ENCODE measurements at regions of chr1 and their contacts with region 1.

Region 1: GRCh38 chr1:172429331-172430127 is 9.0 kb downstream of the C1orf105 start:
- DNase-seq: peak; percentile 99
- ATAC-seq: peak; percentile 76
- H3K4me3 ChIP-seq: no peak overlapping the region
- H3K27ac ChIP-seq: no peak overlapping the region
- H3K4me1 ChIP-seq: peaks cover 20% of the 10 kb centered on the region
- H3K27me3 ChIP-seq: no peaks in the 10 kb centered on the region
- CTCF ChIP-seq: peak; percentile 100

Region 2: DNA sequence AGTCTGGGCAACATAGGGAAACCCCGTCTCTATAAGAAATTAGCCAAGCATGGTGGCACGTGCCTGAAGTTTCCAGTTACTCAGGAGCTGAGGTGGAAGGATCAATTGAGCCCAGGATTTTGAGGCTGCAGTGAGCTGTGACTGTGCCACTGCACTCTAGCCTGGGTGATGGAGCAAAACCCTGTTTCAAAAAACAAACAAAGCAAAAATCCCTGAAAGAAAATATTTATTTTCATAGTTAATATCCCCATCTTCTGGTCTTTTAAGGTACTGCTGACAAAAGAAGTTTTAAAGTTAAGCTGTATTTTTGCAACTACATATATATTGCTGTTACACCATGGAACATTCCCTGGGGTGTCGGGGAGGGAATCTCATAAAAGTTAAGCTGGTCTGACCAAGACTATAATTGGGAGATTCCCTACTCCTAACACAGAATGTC is 713.7 kb before region 1 on chr1:
- CTCF ChIA-PET with region 1: no interaction called
- POLR2A ChIA-PET with region 1: no interaction called
- intact Hi-C with region 1: loop called (anchors 5 kb)
- DNase-seq: peak; percentile 82
- ATAC-seq: peak; percentile 58
- H3K4me3 ChIP-seq: no peak overlapping the region
- H3K27ac ChIP-seq: no peak overlapping the region
- H3K4me1 ChIP-seq: no peaks in the 10 kb centered on the region
- H3K27me3 ChIP-seq: no peaks in the 10 kb centered on the region
- CTCF ChIP-seq: peak; percentile 94

Region 3: GRCh38 chr1:171984850-171985485 is 444.6 kb before region 1 on chr1:
- CTCF ChIA-PET with region 1: no interaction called
- POLR2A ChIA-PET with region 1: no interaction called
- intact Hi-C with region 1: loop called (anchors 1 kb)
- DNase-seq: peak; percentile 78
- ATAC-seq: peak; percentile 54
- H3K4me3 ChIP-seq: no peak overlapping the region
- H3K27ac ChIP-seq: no peak overlapping the region
- H3K4me1 ChIP-seq: no peaks in the 10 kb centered on the region
- H3K27me3 ChIP-seq: peaks cover 32% of the 10 kb centered on the region
- CTCF ChIP-seq: peak; percentile 99

Region 4: DNA sequence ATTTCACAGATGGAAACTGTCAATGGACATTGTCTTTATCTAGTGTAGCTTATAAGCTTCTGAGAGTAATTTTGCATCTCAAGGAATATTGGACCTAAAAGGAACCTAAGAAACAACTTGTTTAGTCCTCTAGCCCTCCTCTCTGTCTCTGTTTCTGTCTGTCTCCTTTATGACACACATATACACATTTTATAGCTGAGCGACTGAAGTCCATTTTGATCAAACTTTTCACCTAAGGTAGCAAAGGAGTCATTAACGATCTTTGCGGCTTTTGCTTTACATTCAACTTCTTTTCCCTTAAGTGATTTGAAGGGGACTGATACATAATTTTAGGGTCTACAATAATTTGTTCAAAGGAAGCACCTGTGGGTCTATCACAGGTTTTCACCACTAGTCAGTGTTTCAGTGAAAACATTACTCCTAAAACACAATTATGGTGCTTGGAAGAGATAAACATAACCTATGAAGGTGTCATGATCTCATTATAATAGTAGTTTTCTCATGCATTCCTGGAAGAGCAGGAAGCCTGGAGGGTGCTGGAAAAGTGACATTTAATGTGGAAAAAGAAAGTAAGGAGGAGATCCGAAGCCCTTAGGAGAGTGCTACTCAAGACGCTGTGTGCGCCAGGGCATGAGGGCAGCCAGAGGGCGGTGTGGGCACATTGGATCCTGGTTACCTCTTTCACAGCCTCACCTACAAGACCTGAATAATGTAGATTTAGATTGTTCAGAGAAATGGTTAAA is 339.6 kb before region 1 on chr1:
- CTCF ChIA-PET with region 1: no interaction called
- POLR2A ChIA-PET with region 1: no interaction called
- intact Hi-C with region 1: loop called (anchors 1 kb)
- DNase-seq: peak; percentile 94
- ATAC-seq: peak; percentile 100
- H3K4me3 ChIP-seq: peak overlapping the region; percentile 10; the same call in 1 of the 2 replicates
- H3K27ac ChIP-seq: no peak overlapping the region
- H3K4me1 ChIP-seq: no peaks in the 10 kb centered on the region
- H3K27me3 ChIP-seq: no peaks in the 10 kb centered on the region
- CTCF ChIP-seq: peak; percentile 100

Region 5: DNA sequence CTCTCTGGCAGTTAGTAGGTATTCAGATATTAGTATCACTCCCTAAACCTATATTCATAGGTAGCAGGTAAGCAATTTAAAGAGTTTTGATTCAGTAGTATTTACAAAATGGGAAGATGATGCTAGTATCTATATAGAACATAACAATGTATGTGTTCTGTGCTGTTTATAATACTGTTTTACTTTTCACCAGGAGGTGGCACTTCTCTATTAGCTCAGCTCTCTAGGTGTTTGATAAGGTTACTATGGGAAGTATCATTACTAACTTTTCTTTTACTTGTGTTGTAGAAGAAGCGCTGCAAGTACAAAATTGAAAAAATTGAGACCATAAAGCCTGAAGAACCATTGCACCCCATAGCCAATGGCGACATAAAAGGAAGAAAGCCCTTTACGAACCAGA is 180.0 kb after region 1 on chr1:
- CTCF ChIA-PET with region 1: no interaction called
- POLR2A ChIA-PET with region 1: no interaction called
- intact Hi-C with region 1: loop called (anchors 1 kb)
- DNase-seq: peak; percentile 88
- ATAC-seq: peak; percentile 93
- H3K4me3 ChIP-seq: no peak overlapping the region
- H3K27ac ChIP-seq: no peak overlapping the region
- H3K4me1 ChIP-seq: 0 out of 2 replicates have a peak, but pooled peaks cover 8% of the 10 kb centered on the region
- H3K27me3 ChIP-seq: no peaks in the 10 kb centered on the region
- CTCF ChIP-seq: peak; percentile 99

Measured in PC-3 (cell line).